Motor neuron (in vitro differentiated cells): ENCODE measurements at regions of chr3 and their contacts with region 1.

Region 1: DNA sequence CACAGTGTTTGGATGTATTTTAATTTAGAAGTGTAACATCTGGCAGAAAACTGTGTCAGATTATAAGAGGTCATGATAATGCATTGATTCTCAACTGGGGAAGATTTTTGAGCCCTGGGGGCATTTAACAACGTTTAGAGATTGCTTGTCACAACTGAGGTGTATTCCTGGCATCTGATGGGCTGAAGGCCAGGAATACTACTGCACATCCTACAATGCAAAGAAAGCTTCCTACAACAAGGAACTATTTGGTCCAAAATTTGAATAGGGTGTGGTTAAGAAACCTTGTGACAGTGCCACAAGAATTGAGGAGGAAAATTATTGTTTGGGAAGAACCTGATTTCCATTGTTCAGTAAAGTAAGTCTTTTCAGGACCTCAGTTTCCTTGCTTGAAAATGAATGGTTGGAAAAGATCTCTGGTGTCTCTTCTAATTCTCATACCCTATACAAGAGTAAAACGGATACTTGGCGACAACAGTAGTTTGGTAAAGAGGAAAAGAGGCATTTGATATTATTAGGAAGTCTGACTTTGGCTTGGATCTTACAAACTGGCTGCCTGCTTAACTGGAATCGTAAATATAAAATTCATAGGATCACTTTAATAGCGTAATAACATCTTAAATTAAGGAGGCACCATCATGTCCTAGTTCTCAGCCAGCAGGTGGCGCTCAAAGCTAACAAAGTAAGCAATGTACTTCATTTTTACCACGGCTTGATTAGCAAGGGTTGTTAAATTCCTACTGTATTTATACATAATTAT is 4.3 kb downstream of the DAZL start:
- ATAC-seq: peak in 6 of 8 experiments; percentile 37 to 86 (median 70)
- H3K4me3 ChIP-seq: no peak overlapping the region
- H3K27ac ChIP-seq: no peak overlapping the region
- H3K4me1 ChIP-seq: no peaks in the 10 kb centered on the region

Region 2: DNA sequence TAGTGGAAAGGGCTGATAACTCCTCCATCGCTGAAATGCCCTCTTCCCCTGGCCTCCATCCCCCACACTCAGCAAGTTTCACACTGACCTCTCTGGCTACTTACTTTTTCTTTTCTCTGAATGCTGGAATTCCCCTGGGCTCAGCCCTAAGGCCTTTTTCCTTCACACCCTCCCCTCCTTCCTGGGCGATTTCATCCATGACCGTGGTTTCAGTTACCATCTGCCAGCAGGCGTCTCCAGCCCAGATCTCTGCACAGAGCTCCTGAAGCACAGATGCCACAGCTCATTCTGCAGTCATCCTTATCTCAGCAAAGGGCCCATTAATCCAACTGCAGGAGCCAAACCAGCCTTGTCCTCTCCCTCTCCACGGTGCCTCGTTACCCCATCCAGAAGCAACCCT is 201.5 kb before region 1 on chr3:
- in situ Hi-C with region 1: no loop called
- ATAC-seq: peak in 7 of 8 experiments; percentile 38 to 98 (median 52)
- H3K4me3 ChIP-seq: no peak overlapping the region
- H3K27ac ChIP-seq: no peak overlapping the region
- H3K4me1 ChIP-seq: peaks cover 0 to 12% of the 10 kb centered on the region in 2 donors

Region 3: GRCh38 chr3:16789344-16790120 is 188.6 kb after region 1 on chr3:
- in situ Hi-C with region 1: loop called in 1 of 9 experiments (anchors 25 kb)
- ATAC-seq: no peak
- H3K4me3 ChIP-seq: no peak overlapping the region
- H3K27ac ChIP-seq: no peak overlapping the region
- H3K4me1 ChIP-seq: peaks cover 0 to 3% of the 10 kb centered on the region in 2 donors

Region 4: GRCh38 chr3:17032407-17033034 is 431.6 kb after region 1 on chr3:
- in situ Hi-C with region 1: loop called in 2 of 9 experiments (anchors 25 kb)
- ATAC-seq: peak in 6 of 8 experiments; percentile 42 to 86 (median 66)
- H3K4me3 ChIP-seq: no peak overlapping the region
- H3K27ac ChIP-seq: no peak overlapping the region
- H3K4me1 ChIP-seq: peaks cover 4 to 7% of the 10 kb centered on the region in 2 donors

Region 5: GRCh38 chr3:17213102-17213501 is 612.1 kb after region 1 on chr3:
- in situ Hi-C with region 1: loop called in 2 of 9 experiments (anchors 25 kb)
- ATAC-seq: no peak
- H3K4me3 ChIP-seq: no peak overlapping the region
- H3K27ac ChIP-seq: no peak overlapping the region
- H3K4me1 ChIP-seq: no peaks in the 10 kb centered on the region

Region 6: GRCh38 chr3:17233398-17233800 is 632.4 kb after region 1 on chr3:
- in situ Hi-C with region 1: loop called in 5 of 9 experiments (anchors 10 to 25 kb)
- ATAC-seq: peak; percentile 64 to 92 (median 84)
- H3K4me3 ChIP-seq: no peak overlapping the region
- H3K27ac ChIP-seq: no peak overlapping the region
- H3K4me1 ChIP-seq: peaks cover 0 to 12% of the 10 kb centered on the region in 2 donors